ENCODE measurements at regions of chr15 and their contacts with region 1.

Region 1: DNA sequence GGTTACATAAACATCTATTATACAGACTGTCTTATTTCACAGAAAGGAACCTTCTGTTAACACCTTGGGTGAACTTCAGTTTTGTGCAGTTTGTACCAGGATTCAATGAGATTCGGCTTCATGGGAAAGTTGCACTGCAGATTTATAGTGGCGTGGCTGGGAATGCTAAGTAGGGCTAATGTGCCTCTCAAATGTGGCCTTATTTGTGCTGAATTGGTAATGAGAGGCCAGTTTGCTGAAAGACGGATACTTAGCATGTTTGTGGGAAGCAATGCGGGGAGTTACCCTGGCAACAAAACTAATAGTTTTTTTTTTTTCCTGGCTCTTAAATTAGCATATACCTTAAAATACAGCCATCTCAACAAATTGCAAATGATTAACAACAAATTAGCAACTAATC is 28.6 kb upstream of the CEMIP start:
- DNase-seq: no peak
- H3K4me3 ChIP-seq: no peak overlapping the region
- H3K27ac ChIP-seq: no peak overlapping the region
- H3K4me1 ChIP-seq: no peaks in the 10 kb centered on the region
- H3K27me3 ChIP-seq: no peaks in the 10 kb centered on the region
- CTCF ChIP-seq: no peak
- EP300 ChIP-seq: no peak
- POLR2A ChIP-seq: no peak

Region 2: GRCh38 chr15:80379693-80380092 is 370.9 kb before region 1 on chr15:
- in situ Hi-C with region 1: no loop called
- intact Hi-C with region 1: no loop called
- DNase-seq: no peak
- H3K4me3 ChIP-seq: no peak overlapping the region
- H3K27ac ChIP-seq: no peak overlapping the region
- H3K4me1 ChIP-seq: no peaks in the 10 kb centered on the region
- H3K27me3 ChIP-seq: no peaks in the 10 kb centered on the region
- CTCF ChIP-seq: no peak
- EP300 ChIP-seq: no peak
- POLR2A ChIP-seq: no peak

Region 3: DNA sequence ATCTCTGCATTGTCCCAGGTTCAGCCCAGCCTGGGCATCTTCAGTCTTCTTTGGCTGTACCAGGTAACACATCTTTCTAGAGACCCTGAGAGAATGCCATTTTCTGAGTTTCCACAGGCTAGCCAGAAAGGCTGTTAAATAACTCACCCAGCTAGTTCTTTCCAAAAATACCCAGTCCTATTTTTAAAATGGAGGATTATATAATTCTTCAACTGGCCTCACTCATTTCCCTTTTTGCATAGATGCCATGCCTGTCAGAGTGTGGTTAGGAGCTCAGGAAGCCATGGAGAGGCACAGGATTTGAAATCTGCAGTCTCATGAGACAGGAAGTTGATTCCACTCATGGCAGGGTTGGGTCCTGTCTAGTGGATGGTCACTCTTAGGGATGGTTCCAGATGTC is 68.4 kb after region 1 on chr15:
- in situ Hi-C with region 1: loop called in 1 of 4 experiments (anchors 10 kb)
- intact Hi-C with region 1: no loop called
- DNase-seq: no peak
- H3K4me3 ChIP-seq: no peak overlapping the region
- H3K27ac ChIP-seq: no peak overlapping the region
- H3K4me1 ChIP-seq: peaks cover 0 to 3% (median 0%) of the 10 kb centered on the region in 4 donors
- H3K27me3 ChIP-seq: no peaks in the 10 kb centered on the region
- CTCF ChIP-seq: no peak
- EP300 ChIP-seq: no peak
- POLR2A ChIP-seq: no peak